Right cardiac atrium (tissue), 5 donors: ENCODE measurements at regions of chr3 and their contacts with region 1.

Region 1: GRCh38 chr3:158539414-158540014 is 31.5 kb upstream of the MLF1 start:
- DNase-seq: no peak
- ATAC-seq: peak in 1 of 2 donors; percentile 43
- H3K4me3 ChIP-seq: no peak overlapping the region
- H3K27ac ChIP-seq: no peak overlapping the region
- H3K4me1 ChIP-seq: no peaks in the 10 kb centered on the region
- H3K27me3 ChIP-seq: no peaks in the 10 kb centered on the region

Region 2: GRCh38 chr3:157618075-157618760 is 921.3 kb before region 1 on chr3:
- intact Hi-C with region 1: loop called in 2 of 4 experiments (anchors 10 kb)
- DNase-seq: no peak
- ATAC-seq: peak; percentile 47 to 60
- H3K4me3 ChIP-seq: no peak overlapping the region
- H3K27ac ChIP-seq: no peak overlapping the region
- H3K4me1 ChIP-seq: no peaks in the 10 kb centered on the region
- H3K27me3 ChIP-seq: no peaks in the 10 kb centered on the region